KBM-7 (cell line): ENCODE measurements at regions of chr21 and their contacts with region 1.

Region 1: GRCh38 chr21:27700974-27701614 is 734.2 kb upstream of the ADAMTS5 start:
- DNase-seq: peak; percentile 79

Region 2: DNA sequence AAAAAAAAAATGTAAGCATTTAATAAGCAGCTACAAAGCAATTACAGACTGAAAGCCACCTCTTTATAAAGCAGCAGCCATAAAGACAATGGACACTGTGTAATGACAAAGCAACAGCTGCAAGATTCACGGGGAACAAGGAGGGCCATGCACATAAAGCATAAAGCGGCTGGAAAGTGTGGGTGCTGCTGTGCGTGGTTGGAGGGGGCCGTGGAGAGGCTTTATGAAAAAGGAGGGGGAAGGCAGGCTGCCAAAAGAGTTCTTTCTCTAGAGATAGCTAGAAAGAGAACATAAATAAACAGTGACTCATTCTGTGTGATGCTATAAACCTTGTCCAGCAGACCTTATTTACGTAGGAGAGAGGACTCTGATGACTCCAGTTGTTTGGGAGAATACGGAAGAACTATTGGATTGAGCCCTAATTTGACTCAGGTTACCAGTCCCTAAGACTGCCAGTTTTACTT is 905.2 kb before region 1 on chr21:
- in situ Hi-C with region 1: no loop called
- DNase-seq: no peak

Region 3: DNA sequence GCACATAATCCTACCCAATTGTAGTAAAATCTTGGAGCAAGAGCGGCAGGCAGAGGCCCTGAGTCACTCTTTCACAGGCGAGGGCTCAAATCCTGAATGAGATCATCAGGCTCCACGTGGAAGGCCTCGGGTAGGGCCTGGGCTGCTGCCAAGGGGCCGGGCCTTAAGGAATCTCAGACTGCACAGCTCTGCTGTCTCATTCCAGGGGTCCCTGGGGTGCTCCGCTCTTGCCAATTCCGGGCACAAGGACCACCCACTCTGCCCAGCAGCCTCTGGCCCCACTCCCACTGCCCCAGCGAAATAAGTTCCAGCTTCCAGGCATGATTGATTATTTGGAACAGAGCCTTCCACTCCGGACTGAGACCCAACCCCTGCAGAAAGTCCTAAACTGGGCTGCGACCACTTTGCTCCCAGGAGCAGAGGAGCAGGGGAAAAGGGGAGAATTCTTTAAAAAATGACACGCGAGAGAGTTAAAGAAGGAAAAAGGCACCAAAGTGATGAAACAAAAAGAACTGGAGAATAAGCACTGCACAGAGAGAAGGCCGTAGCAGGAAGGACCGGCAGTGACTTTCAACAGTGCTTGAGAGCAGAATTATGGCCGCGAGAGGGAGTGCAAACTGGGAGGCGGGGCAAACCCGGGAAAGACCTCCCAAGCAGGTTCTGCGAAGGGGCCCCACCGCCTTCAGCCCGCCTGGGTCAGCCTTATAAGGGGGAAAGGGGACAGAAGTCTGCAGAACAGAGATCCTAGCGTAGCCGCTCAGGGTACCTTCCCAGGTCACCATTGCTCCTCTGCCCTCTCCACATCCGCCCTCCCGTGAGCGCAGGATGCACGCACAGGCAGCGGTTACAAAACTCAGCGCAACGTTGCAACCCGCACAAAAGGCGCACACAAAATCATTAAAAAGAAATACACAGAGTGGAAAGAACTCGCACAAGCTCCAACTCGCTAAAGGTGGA is 857.8 kb before region 1 on chr21:
- in situ Hi-C with region 1: loop called (anchors 25 kb)
- DNase-seq: peak; percentile 64

Region 4: GRCh38 chr21:27505516-27505915 is 195.6 kb before region 1 on chr21:
- in situ Hi-C with region 1: no loop called
- DNase-seq: no peak